Dorsolateral prefrontal cortex (tissue), 120 donors: ENCODE measurements at regions of chr18 and their contacts with region 1.

Region 1: DNA sequence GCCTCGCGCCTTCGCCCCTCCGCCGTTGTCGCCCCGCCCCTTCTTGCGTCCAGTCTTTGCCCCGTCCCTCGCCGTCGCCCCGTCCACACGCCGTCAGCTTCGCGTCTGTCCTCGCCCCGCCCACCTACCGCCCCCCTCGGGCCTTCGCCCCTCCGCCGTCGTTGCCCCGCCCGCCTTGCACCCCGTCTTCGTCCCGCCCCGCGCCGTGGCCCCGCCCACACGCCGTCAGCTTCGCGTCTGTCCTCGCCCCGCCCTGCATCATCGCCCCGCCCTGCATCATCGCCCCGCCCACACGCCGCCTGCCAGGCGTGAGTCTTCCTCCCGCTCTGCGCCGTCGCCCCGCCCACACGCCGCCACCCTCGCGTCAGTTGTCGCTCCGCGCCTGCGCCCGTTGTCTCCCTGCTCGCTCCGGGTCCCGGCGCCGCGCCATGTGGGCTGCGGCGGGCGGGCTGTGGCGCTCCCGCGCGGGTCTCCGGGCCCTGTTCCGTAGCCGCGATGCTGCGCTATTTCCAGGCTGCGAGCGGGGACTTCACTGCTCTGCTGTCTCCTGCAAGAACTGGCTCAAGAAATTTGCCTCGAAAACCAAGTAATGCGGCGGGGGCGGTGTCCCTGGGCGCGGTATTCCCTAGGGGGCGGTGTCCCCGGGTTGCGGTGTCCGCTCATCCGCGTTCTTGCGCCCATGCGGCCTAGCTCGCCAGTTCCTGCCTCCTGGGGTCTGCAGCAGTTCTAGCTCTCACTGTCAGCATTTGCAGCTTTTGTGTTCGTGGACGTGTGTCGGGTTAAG is at the start of gene RBFA:
- DNase-seq: peak; percentile 98 to 100 (median 100)
- H3K4me3 ChIP-seq: peak within 1 kb of the TSS; percentile 66 to 98 (median 89)
- H3K27ac ChIP-seq: peak within 1 kb of the TSS in 57 of 59 donors; percentile 55 to 95 (median 88)
- H3K27me3 ChIP-seq: no peaks in the 10 kb centered on the region
- CTCF ChIP-seq: peak; percentile 38 to 82 (median 58)
- total RNA-seq, gene RBFA: 15.2 to 39.7 (median 28.1) TPM

Region 2: DNA sequence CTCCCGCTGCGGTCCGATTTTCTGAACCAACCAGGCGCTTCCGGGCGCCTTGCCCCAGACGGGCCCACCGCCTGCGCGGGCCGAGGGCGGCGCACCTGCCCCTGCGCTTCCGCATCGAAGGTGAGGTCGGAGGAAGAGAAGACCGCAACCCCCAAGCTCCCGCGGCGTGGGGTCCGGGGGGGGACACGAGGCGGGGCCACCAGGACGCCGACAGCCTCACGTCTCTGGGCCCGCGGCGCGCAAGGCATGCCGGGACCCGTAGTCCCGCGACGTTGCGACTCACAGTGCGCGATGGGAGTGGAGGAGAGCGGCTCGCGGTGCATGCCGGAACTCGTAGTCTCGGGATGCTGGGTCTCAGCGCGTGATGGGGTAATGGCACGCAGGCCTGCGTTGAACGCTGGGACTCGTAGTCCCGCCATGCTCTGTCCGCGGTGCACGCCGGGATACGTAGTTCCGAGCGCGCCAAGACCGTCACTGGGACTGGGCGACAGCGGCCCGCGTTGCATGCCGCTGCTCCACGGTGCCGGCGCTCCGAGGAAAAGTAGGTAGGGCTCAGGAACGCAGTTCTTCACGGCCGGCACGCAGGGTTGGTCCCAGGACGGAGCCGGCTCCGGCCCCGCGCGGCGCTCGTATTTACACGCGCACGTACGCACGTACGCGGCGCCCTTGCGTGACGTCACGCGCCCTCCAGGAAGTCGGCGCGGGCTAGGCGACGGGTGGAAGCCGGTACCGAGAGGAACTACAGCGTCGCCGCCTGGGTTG is 355.0 kb before region 1 on chr18 and contains the start of gene CTDP1:
- intact Hi-C with region 1: loop called (anchors 1 to 5 kb)
- DNase-seq: peak; percentile 99 to 100 (median 100)
- H3K4me3 ChIP-seq: peak within 1 kb of the TSS; percentile 57 to 100 (median 94)
- H3K27ac ChIP-seq: peak within 1 kb of the TSS; percentile 87 to 100 (median 98)
- H3K27me3 ChIP-seq: no peaks in the 10 kb centered on the region
- CTCF ChIP-seq: peak in 20 of 56 donors; percentile 7 to 42 (median 25)
- total RNA-seq, gene CTDP1: 12.4 to 26.2 (median 18.1) TPM

Region 3: GRCh38 chr18:79951578-79952455 is 82.4 kb before region 1 on chr18 and contains the start of gene SLC66A2:
- intact Hi-C with region 1: loop called (anchors 2 to 5 kb)
- DNase-seq: peak; percentile 86 to 96 (median 91)
- H3K4me3 ChIP-seq: peak within 1 kb of the TSS; percentile 69 to 95 (median 89)
- H3K27ac ChIP-seq: peak within 1 kb of the TSS in 52 of 59 donors; percentile 16 to 92 (median 66)
- H3K27me3 ChIP-seq: no peaks in the 10 kb centered on the region
- CTCF ChIP-seq: peak in 19 of 56 donors; percentile 6 to 35 (median 17)
- total RNA-seq, gene SLC66A2: 48.9 to 138 (median 96.6) TPM

Region 4: GRCh38 chr18:79988451-79989194 is 45.6 kb before region 1 on chr18 and contains the start of gene TXNL4A:
- intact Hi-C with region 1: loop called (anchors 2 to 5 kb)
- DNase-seq: peak; percentile 76 to 94 (median 87)
- H3K4me3 ChIP-seq: peak within 1 kb of the TSS; percentile 74 to 100 (median 92)
- H3K27ac ChIP-seq: peak within 1 kb of the TSS; percentile 75 to 99 (median 92)
- H3K27me3 ChIP-seq: no peaks in the 10 kb centered on the region
- CTCF ChIP-seq: peak in 9 of 56 donors; percentile 0 to 37 (median 7)
- total RNA-seq, gene TXNL4A: 68.3 to 133 (median 95.2) TPM

Region 5: DNA sequence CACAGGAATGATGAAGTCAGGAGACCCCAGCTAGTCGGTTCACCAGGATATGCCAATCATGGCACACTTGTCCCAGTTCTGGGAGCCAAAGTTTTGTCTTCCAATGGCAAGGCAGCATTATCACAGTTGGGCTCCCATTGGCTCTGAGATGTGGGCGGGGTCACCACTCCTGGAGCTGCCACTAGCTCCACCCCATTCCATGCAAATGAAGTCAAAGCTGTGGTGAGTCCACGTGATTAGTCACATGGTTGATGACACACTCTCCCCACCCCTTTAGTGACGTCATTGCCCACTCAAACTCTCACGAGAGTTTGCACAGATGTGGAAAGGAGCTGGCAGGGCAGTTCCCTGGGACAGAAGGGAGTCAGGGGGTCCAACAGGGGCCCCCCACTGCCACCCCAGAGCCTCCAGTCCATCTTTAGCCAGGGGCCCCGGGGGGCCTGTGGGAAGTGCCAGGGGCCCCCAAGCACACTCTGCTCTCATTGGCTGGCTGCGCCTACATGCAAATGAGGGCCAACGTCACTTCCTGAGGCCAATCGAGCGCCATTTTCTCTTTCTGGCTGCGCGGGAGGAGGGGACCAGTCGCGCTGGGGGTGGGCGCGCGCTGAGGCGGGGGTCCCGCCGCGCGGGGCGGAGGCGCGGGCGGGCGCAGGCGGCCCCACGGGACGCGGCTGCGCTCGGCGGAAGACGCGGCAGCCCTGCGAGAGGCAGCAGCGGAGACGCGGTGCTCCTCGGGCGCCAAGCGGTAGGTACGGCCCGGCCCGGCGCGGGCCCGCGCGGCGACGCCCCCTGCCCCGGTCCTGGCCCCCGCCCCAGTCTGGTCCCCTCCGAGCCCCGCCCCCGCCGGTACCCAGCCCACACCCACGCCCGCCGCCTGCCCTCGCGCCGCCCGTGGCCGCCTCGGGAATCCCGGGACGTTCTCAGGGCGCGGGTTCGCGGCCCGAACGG is 74.7 kb after region 1 on chr18 and contains the start of gene ADNP2:
- intact Hi-C with region 1: loop called (anchors 2 to 5 kb)
- DNase-seq: peak; percentile 61 to 96 (median 84)
- H3K4me3 ChIP-seq: peak within 1 kb of the TSS; percentile 50 to 88 (median 76)
- H3K27ac ChIP-seq: peak within 1 kb of the TSS; percentile 42 to 97 (median 92)
- H3K27me3 ChIP-seq: no peaks in the 10 kb centered on the region
- CTCF ChIP-seq: no peak
- total RNA-seq, gene ADNP2: 15.4 to 33.2 (median 20.9) TPM

Region 6: GRCh38 chr18:80147418-80148325 is 113.4 kb after region 1 on chr18:
- intact Hi-C with region 1: loop called in 1 of 2 experiments (anchors 5 kb)
- DNase-seq: peak; percentile 70 to 96 (median 90)
- H3K4me3 ChIP-seq: peak overlapping the region; percentile 48 to 87 (median 70)
- H3K27ac ChIP-seq: peak overlapping the region in 43 of 59 donors; percentile 4 to 83 (median 58)
- H3K27me3 ChIP-seq: no peaks in the 10 kb centered on the region
- CTCF ChIP-seq: peak in 3 of 56 donors; percentile 6 to 16 (median 8)

Region 7: DNA sequence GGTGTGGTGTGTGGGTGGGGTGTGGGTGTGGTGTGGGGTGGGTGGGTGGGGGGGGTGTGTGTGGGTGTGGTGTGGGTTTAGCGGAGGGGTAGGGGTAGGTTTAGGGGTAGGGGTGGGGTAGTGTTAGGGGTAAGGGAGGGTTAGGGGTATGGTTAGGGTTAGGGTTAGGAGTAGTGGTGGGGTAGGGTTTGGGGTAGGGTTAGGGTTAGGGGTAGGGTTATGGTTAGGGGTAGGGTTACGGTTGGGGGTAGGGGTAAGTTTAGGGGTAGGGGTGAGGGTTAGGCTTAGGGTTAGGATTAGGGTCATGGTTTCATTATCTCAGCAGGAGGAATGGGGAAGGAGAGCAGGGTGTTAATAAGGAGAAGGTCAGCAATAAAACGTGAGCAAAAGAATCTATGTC is 224.4 kb after region 1 on chr18:
- intact Hi-C with region 1: no loop called
- DNase-seq: no peak
- H3K4me3 ChIP-seq: no peak overlapping the region
- H3K27ac ChIP-seq: no peak overlapping the region
- H3K27me3 ChIP-seq: no peaks in the 10 kb centered on the region
- CTCF ChIP-seq: no peak